ENCODE measurements at regions of chr17 and their contacts with region 1.

Region 1: DNA sequence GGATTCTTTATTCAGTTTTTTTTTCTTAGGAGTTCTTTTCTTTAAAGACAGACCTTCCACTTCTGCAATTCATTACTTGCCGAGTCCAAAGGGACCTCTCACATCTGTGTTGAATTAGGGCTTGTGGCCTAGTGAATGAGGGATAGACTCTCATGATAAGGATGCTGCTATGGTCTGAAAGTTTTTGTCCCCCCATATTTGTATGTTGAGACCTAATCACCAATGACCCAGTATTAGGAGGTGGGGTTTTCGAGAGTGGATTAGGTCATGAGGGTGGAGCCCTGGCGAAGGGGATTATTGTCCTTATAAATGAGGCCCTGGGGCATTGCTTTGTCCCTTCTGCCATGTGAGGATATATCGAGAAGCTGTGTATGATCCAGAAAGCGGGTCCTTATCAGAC is 9.5 kb downstream of the KRT12 start:
- DNase-seq: peak; percentile 51
- H3K4me3 ChIP-seq: no peak overlapping the region
- H3K27ac ChIP-seq: peak overlapping the region; percentile 60
- H3K4me1 ChIP-seq: peaks cover 11% of the 10 kb centered on the region
- H3K27me3 ChIP-seq: no peaks in the 10 kb centered on the region
- CTCF ChIP-seq: no peak

Region 2: DNA sequence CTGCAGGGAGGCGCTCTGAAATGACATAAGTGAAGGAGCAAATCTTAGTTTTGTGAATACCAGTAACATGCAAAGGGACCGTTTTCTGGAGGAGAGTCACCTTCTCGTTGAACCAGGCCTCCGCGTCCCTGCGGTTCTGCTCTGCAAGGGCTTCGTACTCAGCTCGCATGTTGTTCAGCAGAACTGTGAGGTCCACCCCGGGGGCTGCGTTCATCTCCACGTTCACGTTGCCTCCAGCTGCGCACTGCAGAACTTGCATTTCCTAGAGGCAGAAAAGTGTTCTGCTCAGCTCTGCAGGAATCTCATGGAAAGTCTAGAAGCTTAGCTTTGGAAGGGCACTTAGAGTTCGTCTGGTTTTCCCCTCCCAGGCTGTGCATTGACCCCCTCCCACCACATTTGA is 106.5 kb before region 1 on chr17:
- CTCF ChIA-PET with region 1: no interaction called
- POLR2A ChIA-PET with region 1: no interaction called
- intact Hi-C with region 1: no loop called
- DNase-seq: no peak
- H3K4me3 ChIP-seq: no peak overlapping the region
- H3K27ac ChIP-seq: peak overlapping the region; percentile 16
- H3K4me1 ChIP-seq: peaks cover 13% of the 10 kb centered on the region
- H3K27me3 ChIP-seq: no peaks in the 10 kb centered on the region
- CTCF ChIP-seq: no peak

Region 3: DNA sequence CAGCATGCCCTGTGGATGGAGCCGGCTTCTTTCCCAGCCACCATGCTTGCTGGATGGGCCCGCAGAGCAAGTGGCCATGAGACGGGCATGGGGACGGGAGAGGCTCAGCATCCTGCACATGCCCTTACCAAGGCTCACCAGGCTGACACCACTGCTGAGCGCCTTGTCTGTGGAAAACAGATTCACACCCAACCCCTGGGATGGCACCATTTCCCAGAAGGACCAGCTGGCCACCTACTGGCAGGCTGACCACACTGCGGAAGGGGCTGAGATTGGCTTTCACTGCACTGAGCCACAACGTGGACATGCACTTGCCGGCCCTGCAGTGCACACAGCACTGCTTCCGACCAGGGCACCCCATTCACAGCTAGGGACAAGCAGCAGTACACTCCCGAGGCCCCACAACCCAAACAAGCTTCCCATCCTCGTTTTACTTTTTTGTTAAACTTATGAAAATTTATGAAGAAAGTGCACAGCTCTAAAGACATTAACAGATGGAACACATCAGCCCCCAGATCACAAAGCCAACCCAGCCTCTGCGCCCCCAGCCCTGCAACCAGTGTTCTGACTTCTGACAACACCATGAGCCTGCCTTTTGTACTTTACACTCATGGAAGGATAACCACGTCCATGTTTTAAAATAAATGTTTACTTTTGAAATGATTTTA is 471.9 kb after region 1 on chr17:
- CTCF ChIA-PET with region 1: no interaction called
- POLR2A ChIA-PET with region 1: no interaction called
- intact Hi-C with region 1: loop called (anchors 5 kb)
- DNase-seq: peak; percentile 59
- H3K4me3 ChIP-seq: no peak overlapping the region
- H3K27ac ChIP-seq: no peak overlapping the region
- H3K4me1 ChIP-seq: no peaks in the 10 kb centered on the region
- H3K27me3 ChIP-seq: no peaks in the 10 kb centered on the region
- CTCF ChIP-seq: peak; percentile 60